ENCODE measurements at regions of chr3 and their contacts with region 1.

Region 1: DNA sequence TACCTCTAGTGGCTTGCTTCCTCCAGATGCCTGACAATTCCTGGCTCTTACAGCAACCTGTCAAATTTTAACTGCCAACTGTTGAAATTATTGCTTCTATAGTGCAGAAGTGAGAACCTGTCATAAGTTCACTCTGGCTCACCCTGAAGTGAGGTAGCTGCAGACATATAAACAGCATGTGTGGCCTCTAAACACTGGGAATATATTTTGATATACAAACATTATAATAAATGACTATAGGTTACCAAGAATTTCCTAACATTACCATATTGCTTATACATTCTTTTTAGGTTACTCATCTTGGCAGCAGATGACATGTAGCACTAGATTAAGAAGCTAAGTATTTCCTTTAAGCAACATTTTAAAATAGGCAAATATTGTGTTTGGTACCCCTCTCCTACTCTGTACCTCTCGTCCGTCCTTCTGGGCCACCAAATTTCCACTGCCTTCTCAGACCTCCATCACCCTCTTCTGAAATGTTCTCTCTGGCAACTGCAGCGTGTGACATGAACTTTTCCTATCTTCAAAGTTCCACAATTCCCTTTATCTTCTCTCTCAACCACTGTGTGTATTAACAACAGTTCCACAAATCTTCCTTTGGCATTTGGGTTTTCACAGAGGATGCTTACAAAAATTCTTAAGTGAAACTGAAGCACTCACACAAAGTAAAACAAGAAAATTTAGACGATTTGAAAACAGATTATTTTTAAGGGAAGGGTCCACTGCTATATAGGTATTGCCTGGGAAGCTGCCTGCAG is 15.3 kb upstream of the XXYLT1 start:
- ATAC-seq: peak in 2 of 8 experiments; percentile 21 to 72
- H3K4me3 ChIP-seq: no peak overlapping the region
- H3K27ac ChIP-seq: no peak overlapping the region
- H3K4me1 ChIP-seq: no peaks in the 10 kb centered on the region

Region 2: DNA sequence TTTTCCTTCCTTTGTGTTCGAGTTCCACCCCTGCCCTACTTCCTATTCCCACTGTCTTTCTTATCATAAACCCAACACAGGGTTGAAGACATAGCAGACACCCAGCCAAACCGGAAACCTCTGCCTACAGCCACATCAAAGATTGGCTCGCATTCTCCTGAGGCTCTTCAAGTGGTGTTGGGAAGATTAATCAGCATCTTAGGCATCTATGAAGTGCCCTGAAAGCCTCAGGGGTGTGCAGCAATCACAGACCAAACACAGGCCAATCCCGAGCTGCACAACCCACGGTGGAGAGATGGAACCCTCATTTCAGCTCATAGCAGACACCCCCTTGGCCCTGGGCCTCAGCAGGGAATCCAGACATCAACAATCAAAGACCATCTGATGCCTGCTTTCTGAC is 271.3 kb before region 1 on chr3:
- in situ Hi-C with region 1: no loop called
- ATAC-seq: no peak
- H3K4me3 ChIP-seq: no peak overlapping the region
- H3K27ac ChIP-seq: no peak overlapping the region
- H3K4me1 ChIP-seq: no peaks in the 10 kb centered on the region

Region 3: GRCh38 chr3:195522254-195523023 is 236.1 kb after region 1 on chr3:
- in situ Hi-C with region 1: loop called in 2 of 9 experiments (anchors 25 kb)
- ATAC-seq: no peak
- H3K4me3 ChIP-seq: no peak overlapping the region
- H3K27ac ChIP-seq: no peak overlapping the region
- H3K4me1 ChIP-seq: no peaks in the 10 kb centered on the region